ENCODE measurements at regions of chr7 and their contacts with region 1.

Region 1: GRCh38 chr7:1579481-1580421 is 9.9 kb upstream of the PSMG3 start:
- DNase-seq: peak; percentile 82
- H3K4me3 ChIP-seq: no peak overlapping the region
- H3K27ac ChIP-seq: no peak overlapping the region
- H3K4me1 ChIP-seq: peaks cover 4% of the 10 kb centered on the region
- H3K27me3 ChIP-seq: no peaks in the 10 kb centered on the region
- CTCF ChIP-seq: peak; percentile 88

Region 2: DNA sequence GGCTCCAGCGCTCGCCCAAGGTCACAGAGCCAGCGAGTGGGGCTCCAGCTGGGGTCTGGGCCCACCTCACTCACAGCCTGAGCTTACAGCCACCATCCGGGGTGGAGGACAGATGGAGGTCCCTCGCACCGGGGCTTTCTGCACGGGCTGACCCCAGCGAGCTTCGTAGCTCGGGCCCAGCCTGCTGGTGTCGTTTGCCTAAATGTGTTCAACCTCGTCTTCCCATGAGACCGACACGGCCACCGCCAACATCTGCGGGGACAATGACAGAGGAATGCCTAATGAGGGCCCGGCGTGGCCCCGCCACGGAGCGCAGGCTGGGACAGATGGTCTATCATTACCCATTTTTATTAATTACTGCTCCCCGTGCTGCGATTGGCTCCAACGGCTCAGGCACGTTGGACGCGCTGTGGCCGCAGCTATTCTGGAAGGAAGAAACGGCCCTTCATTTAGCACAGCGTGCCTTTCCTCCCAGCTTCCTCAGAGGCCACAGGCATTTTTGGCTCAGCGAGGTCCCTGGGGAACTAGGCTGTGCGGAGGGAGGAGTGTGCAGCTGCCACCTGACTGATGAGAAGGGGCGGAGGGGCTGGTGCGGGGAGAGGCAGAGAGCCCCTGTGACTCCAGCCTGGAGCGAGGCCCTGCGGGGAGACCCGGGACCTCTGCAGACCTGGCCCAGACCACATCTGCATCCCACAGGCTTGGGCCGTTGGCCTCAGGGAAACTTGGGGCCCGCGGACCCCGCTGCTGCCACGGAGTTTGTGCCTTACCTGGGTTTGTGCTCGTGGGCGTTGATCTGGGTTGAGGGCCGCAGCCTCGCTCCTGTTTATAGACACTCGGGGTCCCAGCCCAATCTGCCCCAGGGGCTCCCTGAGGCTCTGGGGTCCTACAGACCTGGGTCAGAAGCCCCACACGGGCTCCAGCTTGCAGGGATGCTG is 67.5 kb after region 1 on chr7:
- CTCF ChIA-PET with region 1: no interaction called
- POLR2A ChIA-PET with region 1: no interaction called
- intact Hi-C with region 1: no loop called
- DNase-seq: peak; percentile 86
- H3K4me3 ChIP-seq: no peak overlapping the region
- H3K27ac ChIP-seq: no peak overlapping the region
- H3K4me1 ChIP-seq: peaks cover 23% of the 10 kb centered on the region
- H3K27me3 ChIP-seq: no peaks in the 10 kb centered on the region
- CTCF ChIP-seq: no peak

Region 3: DNA sequence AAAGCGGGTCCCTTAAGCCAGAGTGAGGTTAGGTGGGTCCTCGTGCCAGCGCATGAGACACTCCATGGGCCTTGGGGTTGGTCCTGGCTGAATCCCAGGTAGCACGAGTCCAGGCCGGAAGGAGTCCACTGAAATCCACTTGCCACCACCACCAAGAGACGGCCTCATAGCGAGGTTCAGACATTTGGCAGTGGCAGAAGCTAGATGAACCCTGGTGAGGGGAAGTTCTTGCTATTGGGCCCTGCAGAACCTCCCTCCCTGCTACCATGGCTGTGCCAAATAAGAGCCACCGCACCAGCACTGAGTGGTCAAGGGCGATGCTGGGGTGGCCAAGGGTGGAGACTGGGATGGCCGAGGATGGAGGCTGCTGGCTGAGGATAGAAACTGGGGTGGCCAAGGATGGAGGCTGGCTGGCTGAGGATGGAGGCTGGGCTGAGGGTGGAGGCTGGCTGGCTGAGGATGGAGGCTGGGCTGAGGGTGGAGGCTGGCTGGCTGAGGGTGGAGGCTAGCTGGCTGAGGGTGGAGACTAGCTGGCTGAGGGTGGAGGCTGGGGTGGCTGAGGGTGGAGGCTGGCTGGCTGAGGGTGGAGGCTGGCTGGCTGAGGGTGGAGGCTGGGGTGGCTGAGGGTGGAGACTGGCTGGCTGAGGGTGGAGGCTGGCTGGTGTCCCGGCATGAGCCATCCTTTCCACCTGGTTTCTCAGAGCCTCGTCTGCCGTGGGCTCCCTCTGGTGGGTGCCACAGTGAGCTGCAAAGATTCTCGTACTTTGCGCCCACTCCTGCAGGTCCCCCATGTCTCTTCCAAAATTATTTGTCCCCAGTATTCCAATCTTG is 178.5 kb after region 1 on chr7:
- CTCF ChIA-PET with region 1: no interaction called
- POLR2A ChIA-PET with region 1: no interaction called
- intact Hi-C with region 1: loop called (anchors 10 kb)
- DNase-seq: peak; percentile 46
- H3K4me3 ChIP-seq: no peak overlapping the region
- H3K27ac ChIP-seq: no peak overlapping the region
- H3K4me1 ChIP-seq: no peaks in the 10 kb centered on the region
- H3K27me3 ChIP-seq: peaks cover 9% of the 10 kb centered on the region
- CTCF ChIP-seq: peak; percentile 56

Region 4: DNA sequence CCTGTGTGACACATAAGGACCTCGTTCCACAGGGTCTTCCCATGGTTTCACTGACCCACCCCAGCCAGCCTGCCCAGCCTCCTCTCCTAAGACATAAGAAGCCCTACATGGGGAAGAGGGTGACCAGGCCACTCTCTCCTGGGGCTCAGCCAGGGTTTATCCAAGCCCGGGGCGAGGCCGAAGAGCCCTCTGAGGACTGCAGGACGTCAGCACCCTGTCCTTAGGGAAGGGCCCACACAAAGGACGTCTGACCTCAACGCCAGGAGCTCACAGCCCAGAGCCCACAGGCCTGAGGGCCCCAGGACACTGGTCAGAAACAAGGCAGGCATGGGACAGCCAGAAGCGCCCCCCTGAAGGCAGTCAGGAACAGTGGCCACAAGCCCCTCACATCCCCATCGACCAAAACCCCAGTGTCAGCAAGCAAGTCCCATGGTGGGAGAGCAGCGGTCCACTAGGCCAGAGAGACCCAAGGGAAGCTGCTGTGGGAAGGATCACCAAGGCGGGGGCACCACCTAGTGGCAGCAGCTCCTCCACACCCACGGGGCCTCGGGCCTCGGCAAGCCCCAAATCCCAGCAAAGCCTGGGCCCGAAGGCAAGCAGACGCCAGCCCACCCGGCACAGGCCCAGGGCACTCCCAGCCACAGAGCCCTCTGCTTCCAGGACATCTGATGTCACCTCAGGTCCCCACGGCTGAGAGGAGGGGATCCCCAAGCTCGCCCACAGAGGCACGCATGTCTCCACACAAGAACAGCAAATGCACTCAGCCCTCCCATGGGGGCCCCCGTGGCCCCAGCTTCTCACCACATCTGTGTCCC is 629.6 kb after region 1 on chr7:
- CTCF ChIA-PET with region 1: no interaction called
- POLR2A ChIA-PET with region 1: no interaction called
- intact Hi-C with region 1: loop called (anchors 5 kb)
- DNase-seq: peak; percentile 69
- H3K4me3 ChIP-seq: no peak overlapping the region
- H3K27ac ChIP-seq: no peak overlapping the region
- H3K4me1 ChIP-seq: no peaks in the 10 kb centered on the region
- H3K27me3 ChIP-seq: no peaks in the 10 kb centered on the region
- CTCF ChIP-seq: peak; percentile 79